ENCODE measurements at regions of chr12 and their contacts with region 1.

Region 1: GRCh38 chr12:12983420-12984035 is 16.5 kb downstream of the HEBP1 start:
- DNase-seq: peak; percentile 40 to 41
- H3K4me3 ChIP-seq: no peak overlapping the region
- H3K27ac ChIP-seq: no peak overlapping the region
- H3K4me1 ChIP-seq: peaks cover 21% of the 10 kb centered on the region
- H3K27me3 ChIP-seq: no peaks in the 10 kb centered on the region
- CTCF ChIP-seq: peak; percentile 77

Region 2: GRCh38 chr12:12376646-12377448 is 606.7 kb before region 1 on chr12:
- CTCF ChIA-PET with region 1: no interaction called
- POLR2A ChIA-PET with region 1: no interaction called
- intact Hi-C with region 1: loop called (anchors 5 kb)
- DNase-seq: peak in 1 of 2 experiments; percentile 80
- H3K4me3 ChIP-seq: no peak overlapping the region
- H3K27ac ChIP-seq: no peak overlapping the region
- H3K4me1 ChIP-seq: no peaks in the 10 kb centered on the region
- H3K27me3 ChIP-seq: no peaks in the 10 kb centered on the region
- CTCF ChIP-seq: peak; percentile 87

Region 3: GRCh38 chr12:12503384-12504078 is 480.0 kb before region 1 on chr12:
- CTCF ChIA-PET with region 1: no interaction called
- POLR2A ChIA-PET with region 1: no interaction called
- intact Hi-C with region 1: no loop called
- DNase-seq: no peak
- H3K4me3 ChIP-seq: no peak overlapping the region
- H3K27ac ChIP-seq: no peak overlapping the region
- H3K4me1 ChIP-seq: no peaks in the 10 kb centered on the region
- H3K27me3 ChIP-seq: no peaks in the 10 kb centered on the region
- CTCF ChIP-seq: no peak

Region 4: DNA sequence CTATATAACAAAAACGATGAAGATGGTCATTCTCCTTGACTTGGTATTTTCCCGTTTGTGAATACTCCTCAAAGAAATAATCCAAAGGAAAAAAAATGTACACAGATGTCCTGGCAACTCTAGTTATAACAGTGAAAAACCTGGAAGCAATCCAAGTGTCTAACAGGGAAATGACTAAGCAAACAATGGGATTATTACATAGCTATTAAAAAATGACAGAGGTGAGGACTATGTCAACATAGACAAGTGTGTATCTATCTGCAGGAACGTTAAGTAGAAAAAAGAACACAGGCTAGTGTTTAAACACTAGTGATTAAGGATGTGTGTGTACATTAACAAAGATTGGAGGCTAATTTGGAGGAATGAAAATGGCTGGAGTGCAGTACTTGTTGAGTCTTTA is 204.0 kb before region 1 on chr12:
- CTCF ChIA-PET with region 1: no interaction called
- POLR2A ChIA-PET with region 1: interaction called, 10 read pairs
- intact Hi-C with region 1: no loop called
- DNase-seq: peak in 1 of 2 experiments; percentile 92
- H3K4me3 ChIP-seq: no peak overlapping the region
- H3K27ac ChIP-seq: peak overlapping the region; percentile 37
- H3K4me1 ChIP-seq: peaks cover 44% of the 10 kb centered on the region
- H3K27me3 ChIP-seq: no peaks in the 10 kb centered on the region
- CTCF ChIP-seq: no peak

Region 5: GRCh38 chr12:12813120-12814101 is 170.1 kb before region 1 on chr12 and contains the start of gene DDX47:
- CTCF ChIA-PET with region 1: interaction called, 9 read pairs
- POLR2A ChIA-PET with region 1: interaction called, 3 read pairs
- intact Hi-C with region 1: loop called (anchors 1 kb)
- DNase-seq: peak; percentile 81 to 98
- H3K4me3 ChIP-seq: peak within 1 kb of the TSS; percentile 67
- H3K27ac ChIP-seq: peak within 1 kb of the TSS; percentile 81
- H3K4me1 ChIP-seq: peaks cover 64% of the 10 kb centered on the region
- H3K27me3 ChIP-seq: no peaks in the 10 kb centered on the region
- CTCF ChIP-seq: peak; percentile 93
- total RNA-seq, gene DDX47: 192 and 196 TPM in 2 replicates

Region 6: DNA sequence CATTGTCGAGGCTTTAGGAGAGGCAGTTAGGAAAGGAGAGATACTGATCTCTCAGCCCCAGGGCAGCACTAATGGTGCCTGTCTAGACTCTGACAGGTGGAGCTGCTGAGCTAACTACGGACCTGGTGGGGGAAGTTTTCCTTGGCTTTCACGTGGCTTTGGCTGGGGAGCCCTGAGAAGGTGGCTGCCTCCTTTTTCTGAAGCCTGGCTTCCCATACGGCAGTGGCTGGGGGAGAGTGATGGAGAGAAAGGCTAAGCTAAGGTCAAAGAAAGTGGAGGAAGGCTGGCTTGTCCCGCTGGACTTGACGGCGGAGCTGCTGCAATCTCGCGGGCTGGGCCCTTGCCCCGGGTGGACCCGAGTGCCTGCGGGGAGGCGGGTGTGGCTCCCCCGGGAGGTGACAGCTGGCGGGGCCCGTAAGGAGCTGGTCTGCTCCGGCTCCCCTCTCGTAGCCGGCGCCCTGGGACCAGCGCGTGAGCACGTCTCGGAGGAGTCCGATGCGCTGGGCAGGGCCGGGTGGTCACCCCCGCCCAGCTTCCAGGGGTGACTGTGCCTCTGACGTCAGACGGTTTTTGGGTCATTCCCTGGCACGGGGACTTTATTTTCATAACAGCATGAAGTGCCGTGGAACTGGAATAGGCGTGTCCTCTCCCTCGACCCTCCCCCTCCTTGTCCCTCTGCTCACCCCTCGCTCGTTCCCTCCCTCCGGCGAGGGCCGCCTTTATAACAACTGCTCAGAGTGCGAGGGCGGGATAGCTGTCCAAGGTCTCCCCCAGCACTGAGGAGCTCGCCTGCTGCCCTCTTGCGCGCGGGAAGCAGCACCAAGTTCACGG is 92.5 kb before region 1 on chr12 and contains the start of gene GPRC5A:
- CTCF ChIA-PET with region 1: interaction called, 3 read pairs
- POLR2A ChIA-PET with region 1: interaction called, 10 read pairs
- intact Hi-C with region 1: loop called (anchors 2 kb)
- DNase-seq: peak; percentile 96 to 100
- H3K4me3 ChIP-seq: peak within 1 kb of the TSS; percentile 86
- H3K27ac ChIP-seq: peak within 1 kb of the TSS; percentile 93
- H3K4me1 ChIP-seq: peaks cover 44% of the 10 kb centered on the region
- H3K27me3 ChIP-seq: no peaks in the 10 kb centered on the region
- CTCF ChIP-seq: no peak; the same call in 1 of the 2 replicates
- total RNA-seq, gene GPRC5A: 468 and 642 TPM in 2 replicates

Region 7: GRCh38 chr12:12916135-12916944 is 67.2 kb before region 1 on chr12:
- CTCF ChIA-PET with region 1: no interaction called
- POLR2A ChIA-PET with region 1: interaction called, 3 read pairs
- intact Hi-C with region 1: loop called (anchors 1 kb)
- DNase-seq: peak; percentile 55 to 82
- H3K4me3 ChIP-seq: no peak overlapping the region
- H3K27ac ChIP-seq: no peak overlapping the region
- H3K4me1 ChIP-seq: 0 out of 2 replicates have a peak, but pooled peaks cover 5% of the 10 kb centered on the region
- H3K27me3 ChIP-seq: no peaks in the 10 kb centered on the region
- CTCF ChIP-seq: peak; percentile 95

Region 8: DNA sequence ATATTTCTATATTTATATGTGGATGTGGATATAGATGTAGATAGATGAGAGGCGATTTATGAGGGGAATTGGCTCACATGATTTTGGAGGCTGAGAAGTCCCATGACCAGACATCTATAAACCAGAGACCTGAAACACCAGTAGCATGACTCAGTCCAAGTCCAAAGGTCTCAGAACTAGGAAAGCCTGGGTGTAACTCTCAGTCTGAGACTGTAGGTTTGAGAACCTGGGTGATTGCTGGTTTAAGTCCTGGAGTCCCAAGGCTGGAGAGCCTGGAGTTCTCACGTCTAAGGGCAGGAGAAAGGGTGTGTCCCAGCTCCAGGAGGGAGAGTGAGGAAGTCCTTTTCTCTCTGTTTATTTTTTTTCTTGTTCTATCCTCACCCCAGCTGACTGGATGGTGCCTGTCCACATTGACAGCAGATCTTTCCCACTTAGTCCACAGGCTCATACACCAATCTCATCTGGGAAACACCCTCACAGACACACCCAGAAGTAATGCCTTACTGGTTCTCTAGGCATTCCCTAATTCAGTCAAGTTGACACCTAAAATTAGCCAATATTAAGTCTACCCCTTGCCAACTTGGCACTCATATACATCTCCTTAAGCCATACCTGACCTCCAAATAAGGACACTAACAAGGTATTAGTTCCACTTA is 258.4 kb after region 1 on chr12:
- CTCF ChIA-PET with region 1: no interaction called
- POLR2A ChIA-PET with region 1: no interaction called
- intact Hi-C with region 1: no loop called
- DNase-seq: no peak
- H3K4me3 ChIP-seq: no peak overlapping the region
- H3K27ac ChIP-seq: 0 out of 2 replicates have a peak overlapping the region, but pooled peaks have one; percentile 40
- H3K4me1 ChIP-seq: peaks cover 10% of the 10 kb centered on the region; the same call in 1 of the 2 replicates
- H3K27me3 ChIP-seq: no peaks in the 10 kb centered on the region
- CTCF ChIP-seq: no peak